Cardiac septum (tissue), 1 donor: ENCODE measurements at regions of chr19 and their contacts with region 1.

Region 1: GRCh38 chr19:46265217-46265828 is 31.5 kb upstream of the HIF3A start:
- DNase-seq: peak; percentile 10

Region 2: DNA sequence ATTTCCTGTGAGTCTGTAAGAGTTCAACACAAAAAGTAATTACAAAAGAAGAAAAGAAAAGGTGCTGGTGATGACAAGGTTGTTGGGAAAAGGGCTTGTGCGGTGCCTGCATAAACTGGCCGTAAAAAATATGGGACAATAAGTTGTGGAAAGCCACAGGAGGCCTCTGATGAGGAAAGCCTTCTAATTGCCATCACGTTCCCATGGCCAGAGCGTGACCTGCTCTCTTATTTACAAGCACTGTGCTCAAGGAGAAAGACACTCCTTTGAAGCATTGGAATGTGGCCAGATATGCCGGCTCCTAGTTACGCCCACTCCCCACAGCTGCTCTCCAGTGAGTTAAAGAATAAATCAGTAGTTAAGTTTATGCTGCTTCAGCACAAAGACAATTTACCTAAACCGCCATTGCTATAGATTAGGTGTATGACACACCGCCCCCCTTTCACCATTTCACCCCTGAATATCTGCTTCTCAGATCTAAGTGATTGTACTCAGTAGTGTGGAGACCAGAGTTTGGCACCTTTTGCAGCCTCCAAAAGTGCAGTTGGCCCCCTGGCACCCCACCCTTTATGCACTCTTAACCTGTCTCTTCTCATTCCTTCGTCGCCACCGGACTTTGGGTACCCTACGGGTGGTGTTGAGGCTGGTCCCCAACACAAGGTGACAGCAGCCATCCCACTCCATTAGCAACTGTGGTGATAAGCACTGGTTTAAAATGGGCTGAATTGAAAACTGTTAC is 234.3 kb before region 1 on chr19:
- intact Hi-C with region 1: loop called (anchors 2 kb)
- DNase-seq: no peak

Region 3: DNA sequence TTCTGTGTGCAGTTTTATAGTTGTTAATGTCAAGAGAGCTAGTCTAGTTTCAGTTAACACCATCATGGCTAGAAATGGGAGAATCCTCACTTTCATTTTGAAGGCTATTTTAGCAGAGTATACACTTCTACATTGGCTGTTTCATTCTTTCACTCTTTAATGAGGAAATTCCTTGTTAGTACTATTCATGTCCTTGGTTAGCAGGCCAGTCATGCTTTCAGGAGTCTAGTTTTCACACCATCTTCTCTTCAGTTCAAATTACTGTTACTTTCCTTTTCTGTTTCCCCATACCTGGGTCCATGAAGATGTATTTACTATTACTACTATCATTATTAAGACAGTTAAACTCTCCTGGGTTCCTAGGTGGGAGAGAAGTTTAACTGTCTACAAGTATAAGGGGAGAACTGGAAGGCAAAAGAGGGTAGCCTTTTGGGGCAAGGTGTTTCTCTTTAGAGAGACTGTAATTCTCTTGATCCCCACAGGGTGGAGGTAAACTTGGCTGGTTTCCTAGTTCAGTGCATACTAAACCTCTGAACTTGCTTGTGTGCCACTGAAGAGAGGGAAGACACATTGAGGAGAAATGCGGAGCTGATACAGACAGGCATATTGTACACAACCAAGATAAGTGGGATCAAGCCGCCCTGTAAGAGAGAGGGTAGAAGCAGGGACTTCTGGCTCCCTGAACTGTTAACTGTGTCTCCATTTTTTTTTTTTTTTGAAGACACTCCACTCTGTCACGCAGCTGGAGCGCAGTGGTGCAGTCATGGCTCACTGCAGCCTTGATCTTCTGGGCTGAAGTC is 183.2 kb before region 1 on chr19:
- intact Hi-C with region 1: loop called (anchors 2 kb)
- DNase-seq: no peak